ENCODE measurements at regions of chr7 and their contacts with region 1.

Region 1: GRCh38 chr7:74289659-74290514 is 680 bp downstream of the CLIP2 start:
- DNase-seq: peak in 5 of 7 donors; percentile 44 to 66 (median 51)
- H3K4me3 ChIP-seq: peak overlapping the region; percentile 40 to 98 (median 50)
- H3K27ac ChIP-seq: peak overlapping the region in 3 of 5 donors; percentile 39 to 87 (median 76)
- H3K4me1 ChIP-seq: peaks cover 25 to 36% of the 10 kb centered on the region in 2 donors
- H3K27me3 ChIP-seq: no peaks in the 10 kb centered on the region
- CTCF ChIP-seq: peak in 1 of 6 experiments; percentile 3
- POLR2A ChIP-seq: no peak

Region 2: GRCh38 chr7:74206589-74207120 is 83.2 kb before region 1 on chr7:
- intact Hi-C with region 1: loop called in 1 of 2 experiments (anchors 10 kb)
- DNase-seq: peak; percentile 78 to 96 (median 91)
- H3K4me3 ChIP-seq: peak overlapping the region in 1 of 4 donors; percentile 40
- H3K27ac ChIP-seq: no peak overlapping the region
- H3K4me1 ChIP-seq: peaks cover 0 to 4% of the 10 kb centered on the region in 2 donors
- H3K27me3 ChIP-seq: no peaks in the 10 kb centered on the region
- CTCF ChIP-seq: peak; percentile 94 to 97 (median 97)
- POLR2A ChIP-seq: no peak

Region 3: DNA sequence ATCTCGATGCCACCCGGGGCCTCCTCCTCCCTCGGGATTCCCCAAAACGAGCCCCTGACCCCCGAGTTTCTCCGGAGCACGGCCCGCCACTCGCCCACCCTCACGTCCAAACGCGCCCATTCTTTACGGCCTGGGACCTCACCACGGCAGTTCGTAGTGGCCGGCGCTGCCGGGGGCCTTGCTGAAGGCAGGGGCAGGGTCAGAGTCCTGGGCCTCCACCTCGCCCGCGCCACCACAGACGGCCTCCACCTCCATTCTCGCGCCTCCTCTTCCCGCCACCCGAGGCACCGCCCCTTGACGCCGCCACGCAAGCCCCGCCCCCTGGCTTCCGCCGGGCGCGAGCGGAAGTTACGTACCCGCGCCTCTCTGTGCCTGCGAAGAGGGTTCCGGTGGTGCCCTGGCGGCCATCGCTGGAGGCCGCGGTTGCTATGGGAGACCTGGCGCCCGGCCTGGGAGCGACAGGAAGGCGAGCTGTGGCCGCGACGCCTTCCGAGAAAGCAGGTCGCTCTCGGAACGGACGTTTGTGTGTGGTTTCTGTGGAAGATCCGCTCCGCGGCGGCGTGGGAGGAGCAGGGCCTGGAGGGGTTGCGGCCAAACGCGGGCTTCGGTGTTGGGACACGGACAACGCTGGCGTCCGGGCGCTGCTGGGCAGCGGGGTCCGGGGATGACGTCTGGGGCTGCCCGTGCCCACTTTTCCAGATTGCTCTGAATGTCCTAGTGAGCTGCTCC is 35.6 kb before region 1 on chr7 and contains the start of gene RFC2:
- intact Hi-C with region 1: loop called in 1 of 2 experiments (anchors 5 kb)
- DNase-seq: peak; percentile 97 to 98 (median 98)
- H3K4me3 ChIP-seq: peak within 1 kb of the TSS; percentile 67 to 84 (median 72)
- H3K27ac ChIP-seq: peak within 1 kb of the TSS; percentile 61 to 98 (median 90)
- H3K4me1 ChIP-seq: peaks cover 12 to 33% of the 10 kb centered on the region in 2 donors
- H3K27me3 ChIP-seq: no peaks in the 10 kb centered on the region
- CTCF ChIP-seq: peak; percentile 6 to 81 (median 52)
- POLR2A ChIP-seq: peak; percentile 63 to 79
- total RNA-seq, gene RFC2: 12.0 to 23.2 (median 15.1) TPM